ENCODE measurements at regions of chrX and their contacts with region 1.

Region 1: GRCh38 chrX:39814391-39814790 is 283.4 kb downstream of the BCOR start:
- DNase-seq: peak; percentile 34 to 53 (median 40)
- ATAC-seq: peak; percentile 56
- H3K4me3 ChIP-seq: no peak overlapping the region
- H3K27ac ChIP-seq: no peak overlapping the region
- H3K4me1 ChIP-seq: peaks cover 10 to 28% of the 10 kb centered on the region in 2 experiments
- H3K27me3 ChIP-seq: no peaks in the 10 kb centered on the region
- CTCF ChIP-seq: peak in 2 of 3 experiments; percentile 46 to 56; a peak in 3 of 6 replicates
- EP300 ChIP-seq: no peak
- POLR2A ChIP-seq: no peak
- RAD21 ChIP-seq: peak; percentile 29 to 68; a peak in 3 of 4 replicates

Region 2: GRCh38 chrX:39652336-39653131 is 161.9 kb before region 1 on chrX:
- CTCF ChIA-PET with region 1: no interaction called
- POLR2A ChIA-PET with region 1: no interaction called
- in situ Hi-C with region 1: no loop called
- intact Hi-C with region 1: loop called (anchors 5 kb)
- DNase-seq: peak; percentile 32 to 59 (median 38)
- ATAC-seq: peak; percentile 83
- H3K4me3 ChIP-seq: no peak overlapping the region
- H3K27ac ChIP-seq: no peak overlapping the region
- H3K4me1 ChIP-seq: no peaks in the 10 kb centered on the region; a peak in 1 of 5 replicates
- H3K27me3 ChIP-seq: peaks cover 0 to 4% of the 10 kb centered on the region in 2 experiments; a peak in 1 of 5 replicates
- CTCF ChIP-seq: peak; percentile 61 to 67 (median 63)
- EP300 ChIP-seq: no peak
- POLR2A ChIP-seq: no peak
- RAD21 ChIP-seq: peak; percentile 70 to 72

Region 3: DNA sequence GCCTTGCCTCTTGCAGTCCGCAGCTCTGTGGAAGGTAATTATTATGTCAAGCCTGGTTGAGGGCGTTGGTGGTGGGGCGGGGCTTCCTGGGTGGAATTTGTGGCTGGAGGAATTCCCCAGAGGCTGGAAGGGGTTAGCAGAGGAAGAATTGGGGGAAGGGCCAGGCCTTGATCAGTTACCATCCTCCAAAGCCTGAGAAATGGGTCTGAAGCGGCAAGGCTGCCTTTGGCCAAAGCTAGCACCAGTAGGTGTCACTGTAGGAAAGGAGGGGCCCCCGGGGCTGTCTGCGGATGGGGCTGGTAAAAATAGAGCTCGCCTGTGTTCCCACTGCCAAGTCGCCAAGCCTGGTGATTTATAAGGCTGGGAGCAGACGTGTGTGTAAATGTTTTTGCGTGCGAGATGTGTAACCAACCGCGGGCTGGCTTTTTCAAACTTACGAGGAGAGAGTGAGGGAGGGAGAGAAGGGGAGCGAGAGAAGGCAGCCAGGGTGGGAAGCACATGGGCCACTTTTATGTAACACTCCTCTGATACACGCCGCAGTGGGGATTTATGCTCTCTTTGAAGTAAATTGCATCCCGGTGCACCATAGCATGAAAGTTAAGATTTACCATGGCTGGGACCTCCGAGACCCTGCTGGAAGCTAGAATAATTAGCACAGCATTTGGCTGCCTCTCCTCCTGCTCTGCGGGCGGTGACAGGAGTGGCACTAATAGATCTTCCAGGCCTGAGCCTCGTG is 83.6 kb before region 1 on chrX:
- CTCF ChIA-PET with region 1: no interaction called
- POLR2A ChIA-PET with region 1: no interaction called
- in situ Hi-C with region 1: no loop called
- intact Hi-C with region 1: no loop called
- DNase-seq: peak; percentile 67 to 77 (median 70)
- ATAC-seq: peak; percentile 95
- H3K4me3 ChIP-seq: peak overlapping the region; percentile 16; the same call in 1 of the 2 replicates
- H3K27ac ChIP-seq: peak overlapping the region; percentile 28; the same call in 1 of the 3 replicates
- H3K4me1 ChIP-seq: peaks cover 8 to 9% of the 10 kb centered on the region in 2 experiments; a peak in 4 of 5 replicates
- H3K27me3 ChIP-seq: no peaks in the 10 kb centered on the region
- CTCF ChIP-seq: peak; percentile 65 to 75 (median 73)
- EP300 ChIP-seq: no peak
- POLR2A ChIP-seq: no peak
- RAD21 ChIP-seq: peak; percentile 79 to 80

Region 4: DNA sequence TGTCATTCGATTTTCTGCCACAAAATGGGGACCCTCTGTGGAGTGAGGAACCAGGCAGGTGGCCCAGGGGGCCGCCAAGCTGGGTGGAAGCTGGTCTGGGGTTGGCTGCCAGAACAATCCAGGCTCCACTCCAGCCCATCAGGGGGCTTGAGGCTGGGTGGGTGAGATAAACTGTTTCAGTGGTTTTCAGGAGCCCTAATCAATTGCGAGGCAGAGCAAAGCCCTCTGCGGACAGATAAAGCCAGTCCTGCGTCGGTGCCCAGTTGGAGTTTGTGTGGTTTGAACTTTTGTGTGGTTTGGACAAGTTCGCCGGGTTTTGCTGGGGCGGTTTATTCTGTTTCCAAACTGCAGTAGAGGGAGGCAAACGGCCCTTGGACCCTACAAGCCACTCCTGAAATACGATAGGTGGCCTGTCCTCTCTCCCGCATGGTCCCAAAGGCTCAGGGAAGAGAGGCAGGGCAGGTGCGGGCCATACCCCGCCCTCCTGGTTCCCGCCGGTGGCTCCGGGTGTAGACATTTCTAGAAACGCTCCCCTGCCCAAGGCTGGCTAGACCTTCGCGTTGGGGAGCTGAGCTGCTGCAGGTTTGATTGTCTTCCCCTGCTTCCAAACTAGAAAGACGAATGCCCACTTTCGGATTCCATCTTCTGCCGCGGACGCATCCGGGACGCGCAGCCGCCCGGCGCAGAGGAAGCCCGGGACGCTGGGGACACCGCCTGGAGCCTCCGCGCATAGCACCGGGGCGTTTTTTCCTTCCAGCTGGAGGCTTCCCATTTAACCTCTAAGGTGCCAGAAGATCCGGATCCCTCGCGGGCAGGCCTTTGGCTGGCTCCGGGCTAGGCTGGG is 452.3 kb after region 1 on chrX:
- CTCF ChIA-PET with region 1: no interaction called
- POLR2A ChIA-PET with region 1: no interaction called
- in situ Hi-C with region 1: no loop called
- intact Hi-C with region 1: loop called (anchors 10 kb)
- DNase-seq: peak; percentile 68 to 77 (median 72)
- ATAC-seq: peak; percentile 92
- H3K4me3 ChIP-seq: peak overlapping the region; percentile 34
- H3K27ac ChIP-seq: peak overlapping the region; percentile 57; the same call in 2 of the 3 replicates
- H3K4me1 ChIP-seq: peaks cover 17 to 32% of the 10 kb centered on the region in 2 experiments; a peak in 4 of 5 replicates
- H3K27me3 ChIP-seq: no peaks in the 10 kb centered on the region
- CTCF ChIP-seq: peak; percentile 75 to 82 (median 75)
- EP300 ChIP-seq: peak; percentile 48; the same call in 1 of the 2 replicates
- POLR2A ChIP-seq: no peak
- RAD21 ChIP-seq: peak; percentile 82 to 84